ENCODE measurements at regions of chr14 and their contacts with region 1.

Region 1: DNA sequence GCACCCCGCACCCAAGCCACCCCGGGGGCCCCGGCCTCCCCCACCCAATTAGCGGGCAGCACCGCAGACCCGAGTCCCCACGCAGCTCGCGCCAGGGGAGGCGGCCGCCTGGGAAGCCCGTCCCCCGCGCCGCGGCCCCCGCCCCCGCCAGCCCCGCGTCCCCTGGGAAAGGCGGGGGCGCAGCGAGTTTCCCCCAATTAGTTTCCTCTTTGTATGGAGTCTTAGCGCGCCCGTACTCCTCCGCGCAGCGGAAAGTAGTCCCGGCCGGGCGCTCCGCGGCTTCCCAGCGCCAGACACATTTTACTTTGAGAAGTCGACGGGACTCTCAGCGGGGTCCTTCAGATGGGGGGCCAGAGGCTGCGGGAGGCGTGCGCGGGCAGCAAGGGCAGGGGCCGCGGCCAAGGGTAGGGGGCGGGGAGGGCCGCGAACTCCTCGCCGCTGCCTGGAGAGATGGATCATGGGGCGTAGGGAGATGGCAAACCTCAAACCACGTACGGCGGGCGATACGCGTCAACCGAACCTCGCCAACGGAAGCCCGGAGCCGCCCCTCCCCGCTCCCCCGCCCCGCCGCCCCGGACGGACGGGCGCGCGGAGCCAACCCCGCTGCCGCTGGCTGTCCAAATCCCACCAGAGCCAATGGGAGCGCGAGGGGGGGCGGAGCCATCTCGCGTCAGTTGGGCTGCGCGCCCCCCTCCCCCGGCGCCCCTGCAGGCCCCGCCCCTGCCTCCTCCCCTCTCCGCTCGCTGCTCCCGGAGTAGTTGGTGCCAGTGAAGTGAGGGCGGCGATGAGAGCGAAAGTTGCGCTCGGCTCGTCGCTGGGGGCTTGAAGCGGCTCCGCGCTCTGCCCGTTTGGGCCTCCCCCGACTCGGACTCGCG is at the start of gene RCOR1:
- DNase-seq: peak; percentile 97
- H3K4me3 Mint-ChIP-seq: peak within 1 kb of the TSS; percentile 85
- H3K27ac Mint-ChIP-seq: peak within 1 kb of the TSS; percentile 85
- H3K4me1 Mint-ChIP-seq: peaks cover 29% of the 10 kb centered on the region
- H3K27me3 Mint-ChIP-seq: no peaks in the 10 kb centered on the region
- CTCF ChIP-seq: no peak
- total RNA-seq, gene RCOR1: 45.6 and 55.9 TPM in 2 replicates

Region 2: DNA sequence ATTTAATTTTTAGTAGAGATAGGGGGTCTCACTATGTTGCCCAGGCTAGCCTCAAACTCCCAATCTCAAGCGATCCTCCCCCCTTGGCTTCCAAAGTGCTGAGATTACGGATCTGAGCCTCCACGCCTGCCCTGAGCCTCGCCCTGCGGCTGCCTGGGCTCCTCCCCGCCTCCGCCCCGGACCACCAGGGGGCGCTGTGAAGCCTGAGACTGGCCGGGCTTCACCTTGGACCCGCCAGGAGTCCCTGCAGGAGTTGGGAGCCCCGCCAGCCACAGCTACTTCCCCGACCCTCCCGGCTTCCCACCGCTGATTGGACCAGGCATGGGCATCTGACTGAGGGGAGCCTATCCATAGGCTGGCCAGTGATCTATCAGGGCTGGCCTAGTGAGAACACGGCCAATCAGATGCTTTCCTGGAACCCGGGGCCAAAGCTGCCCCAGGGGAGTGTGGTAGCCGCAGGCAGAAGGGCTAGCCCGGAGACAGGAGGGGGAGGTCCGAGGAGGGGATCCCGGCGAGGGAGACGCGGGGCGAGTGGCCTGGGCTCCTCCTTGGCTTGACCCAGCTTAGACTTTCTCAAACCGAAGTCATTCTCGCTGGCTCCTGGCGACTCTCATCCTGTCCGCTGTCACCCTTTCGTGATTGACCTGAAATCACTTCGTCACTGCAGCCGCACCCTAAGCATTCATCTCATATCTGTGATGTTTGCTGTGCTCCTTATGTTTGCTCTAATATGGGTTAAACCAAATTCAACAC is 67.5 kb before region 1 on chr14:
- CTCF ChIA-PET with region 1: interaction called, 61 read pairs
- POLR2A ChIA-PET with region 1: interaction called, 88 read pairs
- intact Hi-C with region 1: loop called (anchors 1 kb)
- DNase-seq: peak; percentile 99
- H3K4me3 Mint-ChIP-seq: peak overlapping the region; percentile 95
- H3K27ac Mint-ChIP-seq: peak overlapping the region; percentile 97
- H3K4me1 Mint-ChIP-seq: peaks cover 25% of the 10 kb centered on the region
- H3K27me3 Mint-ChIP-seq: no peaks in the 10 kb centered on the region
- CTCF ChIP-seq: peak; percentile 92

Region 3: DNA sequence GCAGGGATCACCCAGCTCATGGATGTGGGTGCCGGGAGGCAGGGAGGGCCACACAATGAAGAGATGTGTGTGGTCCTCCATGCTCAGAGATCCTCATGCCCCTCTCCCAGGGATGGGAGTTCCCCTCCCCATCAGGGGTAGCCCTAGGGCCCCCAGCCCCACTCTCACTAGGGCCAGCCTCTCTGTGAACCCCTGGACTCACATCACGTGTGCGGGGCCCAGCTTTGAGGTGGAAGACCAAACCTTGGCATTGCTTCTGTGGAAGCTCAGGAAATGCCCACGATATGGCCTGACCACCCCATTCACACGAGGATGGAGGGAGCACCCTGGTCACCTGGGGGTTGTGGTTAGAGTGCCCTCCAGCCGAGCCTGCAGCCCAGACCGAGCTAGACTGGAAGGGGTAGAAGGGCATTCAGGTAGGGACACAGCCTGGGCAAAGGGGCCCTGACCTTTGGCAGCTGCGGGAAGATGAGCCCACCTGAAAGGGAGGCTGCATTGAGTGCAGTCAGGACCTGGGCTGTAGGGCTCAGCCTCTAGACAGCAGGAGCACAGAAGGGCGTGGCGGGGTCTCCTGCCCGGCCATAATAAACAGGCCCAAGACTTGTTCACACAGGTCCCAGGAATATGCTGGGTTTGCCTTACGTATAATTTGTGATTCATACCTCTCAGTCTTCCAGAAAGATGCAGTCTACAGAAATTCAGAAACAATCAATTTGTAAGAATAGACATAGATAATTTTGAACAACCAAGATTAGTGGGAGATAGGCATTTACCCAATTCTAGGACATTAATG is 34.5 kb before region 1 on chr14:
- CTCF ChIA-PET with region 1: interaction called, 7 read pairs
- POLR2A ChIA-PET with region 1: interaction called, 13 read pairs
- intact Hi-C with region 1: loop called (anchors 2 kb)
- DNase-seq: peak; percentile 69
- H3K4me3 Mint-ChIP-seq: no peak overlapping the region
- H3K27ac Mint-ChIP-seq: peak overlapping the region; percentile 70
- H3K4me1 Mint-ChIP-seq: peaks cover 8% of the 10 kb centered on the region
- H3K27me3 Mint-ChIP-seq: no peaks in the 10 kb centered on the region
- CTCF ChIP-seq: no peak

Region 4: DNA sequence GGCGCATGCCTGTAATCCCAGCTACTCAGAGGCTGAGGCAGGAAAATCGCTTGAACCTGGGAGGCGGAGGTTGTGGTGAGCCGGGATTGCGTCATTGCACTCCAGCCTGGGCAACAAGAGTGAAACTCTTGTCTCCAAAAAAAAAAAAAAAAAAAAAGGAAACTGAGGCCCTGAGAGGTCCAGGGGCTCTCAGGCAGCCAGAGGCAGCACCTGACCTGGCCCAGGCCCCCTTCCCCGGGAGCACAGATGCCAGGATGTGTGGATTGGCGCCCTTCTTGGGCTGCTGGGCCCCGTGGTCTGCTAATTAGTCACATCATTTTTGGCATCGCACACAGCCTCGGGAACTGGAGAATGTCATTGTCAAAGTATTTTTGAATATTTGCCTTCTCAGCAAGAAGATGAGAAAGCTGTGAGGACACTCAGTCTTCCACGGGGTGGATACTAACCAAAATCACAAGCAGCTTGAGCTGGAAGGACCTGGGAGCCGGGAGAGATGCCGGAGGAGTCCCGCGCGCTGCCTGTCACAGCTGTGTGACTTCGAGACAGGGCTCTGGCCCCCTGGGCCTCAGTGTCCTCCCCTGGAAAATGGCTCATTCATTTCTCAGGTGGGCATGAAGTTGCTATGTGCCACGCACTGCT is 12.3 kb before region 1 on chr14:
- CTCF ChIA-PET with region 1: interaction called, 4 read pairs
- POLR2A ChIA-PET with region 1: interaction called, 13 read pairs
- intact Hi-C with region 1: no loop called
- DNase-seq: peak; percentile 65
- H3K4me3 Mint-ChIP-seq: no peak overlapping the region
- H3K27ac Mint-ChIP-seq: peak overlapping the region; percentile 69
- H3K4me1 Mint-ChIP-seq: peaks cover 26% of the 10 kb centered on the region
- H3K27me3 Mint-ChIP-seq: no peaks in the 10 kb centered on the region
- CTCF ChIP-seq: no peak

Region 5: GRCh38 chr14:102655170-102655569 is 63.0 kb after region 1 on chr14:
- CTCF ChIA-PET with region 1: interaction called, 4 read pairs
- POLR2A ChIA-PET with region 1: interaction called, 12 read pairs
- intact Hi-C with region 1: no loop called
- DNase-seq: peak; percentile 50
- H3K4me3 Mint-ChIP-seq: no peak overlapping the region
- H3K27ac Mint-ChIP-seq: peak overlapping the region; percentile 39
- H3K4me1 Mint-ChIP-seq: peaks cover 29% of the 10 kb centered on the region
- H3K27me3 Mint-ChIP-seq: no peaks in the 10 kb centered on the region
- CTCF ChIP-seq: no peak

Region 6: DNA sequence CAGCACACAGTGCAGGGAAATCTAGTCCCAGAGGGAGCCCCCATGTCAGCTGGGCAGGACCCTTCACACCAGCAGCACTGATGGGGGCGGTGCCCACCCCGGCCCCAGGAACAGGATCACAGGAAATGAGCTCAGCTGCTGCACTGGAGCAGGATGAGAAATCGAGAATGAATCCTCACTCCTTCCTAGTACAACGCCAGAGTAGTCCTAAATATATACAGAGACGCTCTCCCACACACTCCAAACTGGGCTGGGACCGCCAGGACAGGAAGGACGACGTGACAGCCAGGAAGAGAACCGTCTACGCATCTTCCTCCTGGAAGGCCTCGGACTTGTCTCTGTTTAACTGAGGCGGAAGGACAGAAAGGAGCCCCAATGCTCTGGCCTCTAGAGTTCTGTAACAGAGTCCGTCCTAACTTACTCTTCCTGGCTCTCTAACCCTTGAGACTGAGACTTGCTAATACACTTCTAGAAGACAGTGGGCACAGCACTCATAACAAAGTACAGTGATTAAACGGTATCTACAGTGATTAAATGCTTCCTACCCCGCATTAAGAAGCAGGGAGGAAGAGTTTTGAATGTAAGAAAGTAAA is 431.9 kb after region 1 on chr14:
- CTCF ChIA-PET with region 1: no interaction called
- POLR2A ChIA-PET with region 1: no interaction called
- intact Hi-C with region 1: no loop called
- DNase-seq: peak; percentile 48
- H3K4me3 Mint-ChIP-seq: no peak overlapping the region
- H3K27ac Mint-ChIP-seq: peak overlapping the region; percentile 46
- H3K4me1 Mint-ChIP-seq: peaks cover 37% of the 10 kb centered on the region
- H3K27me3 Mint-ChIP-seq: no peaks in the 10 kb centered on the region
- CTCF ChIP-seq: no peak

Measured in MCF 10A (cell line).